ENCODE measurements at regions of chr1 and their contacts with region 1.

Region 1: GRCh38 chr1:3910857-3911845 is 11.1 kb upstream of the C1orf174 start:
- DNase-seq: peak; percentile 70
- ATAC-seq: peak; percentile 92
- H3K4me3 Mint-ChIP-seq: no peak overlapping the region
- H3K27ac Mint-ChIP-seq: no peak overlapping the region
- H3K4me1 Mint-ChIP-seq: peaks cover 23% of the 10 kb centered on the region
- H3K27me3 Mint-ChIP-seq: peaks cover 3% of the 10 kb centered on the region
- CTCF ChIP-seq: peak; percentile 67

Region 2: GRCh38 chr1:3846541-3846940 is 64.6 kb before region 1 on chr1:
- CTCF ChIA-PET with region 1: no interaction called
- POLR2A ChIA-PET with region 1: no interaction called
- intact Hi-C with region 1: no loop called
- DNase-seq: no peak
- ATAC-seq: no peak
- H3K4me3 Mint-ChIP-seq: no peak overlapping the region
- H3K27ac Mint-ChIP-seq: no peak overlapping the region
- H3K4me1 Mint-ChIP-seq: peaks cover 22% of the 10 kb centered on the region
- H3K27me3 Mint-ChIP-seq: no peaks in the 10 kb centered on the region
- CTCF ChIP-seq: no peak

Region 3: GRCh38 chr1:4060850-4061249 is 149.7 kb after region 1 on chr1:
- CTCF ChIA-PET with region 1: no interaction called
- POLR2A ChIA-PET with region 1: no interaction called
- intact Hi-C with region 1: loop called (anchors 5 kb)
- DNase-seq: no peak
- ATAC-seq: no peak
- H3K4me3 Mint-ChIP-seq: no peak overlapping the region
- H3K27ac Mint-ChIP-seq: no peak overlapping the region
- H3K4me1 Mint-ChIP-seq: no peaks in the 10 kb centered on the region
- H3K27me3 Mint-ChIP-seq: no peaks in the 10 kb centered on the region
- CTCF ChIP-seq: no peak

Region 4: DNA sequence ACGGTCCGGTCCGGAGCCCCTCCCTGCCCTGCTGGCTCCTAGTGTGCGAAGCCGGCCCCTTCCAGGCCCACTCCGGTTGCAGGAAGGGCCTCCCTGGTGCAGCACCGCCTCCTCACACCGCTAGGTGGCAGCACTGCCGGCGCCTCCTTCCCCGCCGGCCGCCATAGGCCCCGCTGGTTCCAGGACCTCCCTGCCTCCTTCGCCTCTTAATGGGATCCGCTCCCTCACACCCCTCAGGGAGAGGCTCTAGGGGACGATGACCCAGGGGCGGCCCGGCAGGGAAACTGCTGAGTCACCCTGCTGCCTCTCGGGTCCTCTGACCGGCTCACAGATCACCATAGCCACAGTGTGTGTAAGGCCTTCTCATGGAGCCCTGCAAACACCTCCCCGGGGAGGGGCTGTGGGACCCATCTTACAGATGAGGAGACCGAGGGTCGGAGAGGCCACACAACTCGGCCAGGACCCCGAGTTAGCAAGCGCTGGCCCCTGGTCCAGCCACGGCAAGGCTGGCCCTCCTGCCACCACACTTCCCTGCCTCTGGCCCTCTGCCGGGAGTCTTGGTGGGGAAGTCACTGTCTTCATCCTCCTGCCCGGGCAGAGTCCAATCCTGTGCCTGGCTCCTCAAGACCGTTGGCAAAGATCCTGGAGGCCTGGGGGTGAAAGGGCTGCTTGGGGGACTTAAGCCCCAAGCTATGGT is 741.6 kb after region 1 on chr1:
- CTCF ChIA-PET with region 1: interaction called, 3 read pairs
- POLR2A ChIA-PET with region 1: no interaction called
- intact Hi-C with region 1: loop called (anchors 1 kb)
- DNase-seq: peak; percentile 51
- ATAC-seq: peak; percentile 62
- H3K4me3 Mint-ChIP-seq: no peak overlapping the region
- H3K27ac Mint-ChIP-seq: no peak overlapping the region
- H3K4me1 Mint-ChIP-seq: peaks cover 2% of the 10 kb centered on the region
- H3K27me3 Mint-ChIP-seq: peaks cover 35% of the 10 kb centered on the region
- CTCF ChIP-seq: peak; percentile 72

Measured in activated B cell treated with CpG ODN at 0.5 μM for 24 hours (primary cell).